CD4-positive, alpha-beta T cell (primary cell): ENCODE measurements at regions of chr14 and their contacts with region 1.

Region 1: DNA sequence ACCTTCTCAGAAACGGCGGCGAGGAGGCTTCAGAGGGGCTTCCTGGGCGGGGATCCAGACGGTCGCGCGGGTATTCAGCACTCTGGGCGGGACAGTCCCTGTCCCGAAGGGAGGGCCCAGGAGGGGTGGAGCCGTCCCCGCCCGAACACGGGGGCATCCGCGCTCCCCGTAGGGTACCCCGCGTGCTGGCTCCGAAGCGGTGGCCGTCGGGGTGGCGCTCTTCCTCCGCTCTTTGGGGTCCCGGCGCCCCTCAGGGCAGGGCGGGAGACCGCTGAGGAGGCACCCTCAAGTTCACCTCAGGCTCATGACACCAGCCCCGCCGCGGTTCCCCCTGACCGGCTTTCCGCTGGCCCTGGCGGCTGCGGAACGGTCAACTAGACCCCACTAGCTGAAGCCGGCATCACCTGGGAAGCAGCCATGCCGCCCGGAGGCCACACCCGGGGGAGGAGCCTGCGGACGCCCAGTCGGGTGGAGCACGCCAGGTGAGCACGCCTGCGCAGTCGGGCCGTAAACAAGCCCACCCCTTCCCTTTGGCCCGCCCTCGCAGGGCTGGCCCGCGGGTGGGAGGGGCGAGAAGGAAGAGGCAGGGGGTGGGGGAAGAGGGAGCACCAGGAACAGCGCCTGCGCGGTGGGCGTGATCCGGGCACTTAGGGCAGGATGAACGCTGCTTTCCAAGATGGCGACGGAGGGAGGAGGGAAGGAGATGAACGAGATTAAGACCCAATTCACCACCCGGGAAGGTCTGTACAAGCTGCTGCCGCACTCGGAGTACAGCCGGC is at the start of gene WDR20:
- DNase-seq: peak; percentile 99 to 100 (median 99)
- ATAC-seq: peak; percentile 94
- H3K4me3 ChIP-seq: peak within 1 kb of the TSS; percentile 96
- H3K4me3 Mint-ChIP-seq: peak within 1 kb of the TSS; percentile 100
- H3K27ac ChIP-seq: peak within 1 kb of the TSS; percentile 77 to 88
- H3K27ac Mint-ChIP-seq: peak within 1 kb of the TSS; percentile 99
- H3K4me1 ChIP-seq: peaks cover 16% of the 10 kb centered on the region
- H3K4me1 Mint-ChIP-seq: peaks cover 30% of the 10 kb centered on the region
- H3K27me3 ChIP-seq: no peaks in the 10 kb centered on the region
- H3K27me3 Mint-ChIP-seq: no peaks in the 10 kb centered on the region
- CTCF ChIP-seq: no peak
- total RNA-seq, gene WDR20: 40.1 to 41.2 TPM

Region 2: GRCh38 chr14:101947906-101948665 is 191.4 kb before region 1 on chr14:
- CTCF ChIA-PET with region 1: no interaction called
- POLR2A ChIA-PET with region 1: interaction called, 4 read pairs
- intact Hi-C with region 1: loop called in 1 of 2 experiments (anchors 1 kb)
- DNase-seq: peak; percentile 98 to 100 (median 99)
- ATAC-seq: peak; percentile 96
- H3K4me3 ChIP-seq: peak overlapping the region; percentile 78
- H3K4me3 Mint-ChIP-seq: peak overlapping the region; percentile 94
- H3K27ac ChIP-seq: peak overlapping the region; percentile 87 to 93
- H3K27ac Mint-ChIP-seq: peak overlapping the region; percentile 99
- H3K4me1 ChIP-seq: peaks cover 23% of the 10 kb centered on the region
- H3K4me1 Mint-ChIP-seq: peaks cover 18% of the 10 kb centered on the region
- H3K27me3 ChIP-seq: peaks cover 8 to 22% of the 10 kb centered on the region in 2 experiments
- H3K27me3 Mint-ChIP-seq: peaks cover 31% of the 10 kb centered on the region
- CTCF ChIP-seq: no peak

Region 3: GRCh38 chr14:102034301-102034700 is 105.1 kb before region 1 on chr14:
- CTCF ChIA-PET with region 1: no interaction called
- POLR2A ChIA-PET with region 1: no interaction called
- intact Hi-C with region 1: no loop called
- DNase-seq: no peak
- ATAC-seq: no peak
- H3K4me3 ChIP-seq: no peak overlapping the region
- H3K4me3 Mint-ChIP-seq: no peak overlapping the region
- H3K27ac ChIP-seq: no peak overlapping the region
- H3K27ac Mint-ChIP-seq: no peak overlapping the region
- H3K4me1 ChIP-seq: no peaks in the 10 kb centered on the region
- H3K4me1 Mint-ChIP-seq: no peaks in the 10 kb centered on the region
- H3K27me3 ChIP-seq: no peaks in the 10 kb centered on the region
- H3K27me3 Mint-ChIP-seq: no peaks in the 10 kb centered on the region
- CTCF ChIP-seq: no peak

Region 4: GRCh38 chr14:102063091-102063802 is 76.2 kb before region 1 on chr14:
- CTCF ChIA-PET with region 1: no interaction called
- POLR2A ChIA-PET with region 1: no interaction called
- intact Hi-C with region 1: no loop called
- DNase-seq: peak; percentile 51 to 86 (median 62)
- ATAC-seq: peak; percentile 95
- H3K4me3 ChIP-seq: no peak overlapping the region
- H3K4me3 Mint-ChIP-seq: no peak overlapping the region
- H3K27ac ChIP-seq: no peak overlapping the region
- H3K27ac Mint-ChIP-seq: no peak overlapping the region
- H3K4me1 ChIP-seq: peaks cover 6% of the 10 kb centered on the region
- H3K4me1 Mint-ChIP-seq: peaks cover 4% of the 10 kb centered on the region
- H3K27me3 ChIP-seq: no peaks in the 10 kb centered on the region
- H3K27me3 Mint-ChIP-seq: no peaks in the 10 kb centered on the region
- CTCF ChIP-seq: peak; percentile 32

Region 5: GRCh38 chr14:102086972-102087761 is 52.3 kb before region 1 on chr14 and contains the start of gene HSP90AA1:
- CTCF ChIA-PET with region 1: no interaction called
- POLR2A ChIA-PET with region 1: interaction called, 12 read pairs
- intact Hi-C with region 1: loop called (anchors 2 kb)
- DNase-seq: peak; percentile 88 to 98 (median 94)
- ATAC-seq: peak; percentile 77
- H3K4me3 ChIP-seq: peak within 1 kb of the TSS; percentile 74
- H3K4me3 Mint-ChIP-seq: peak within 1 kb of the TSS; percentile 98
- H3K27ac ChIP-seq: peak within 1 kb of the TSS; percentile 95 to 98
- H3K27ac Mint-ChIP-seq: peak within 1 kb of the TSS; percentile 91
- H3K4me1 ChIP-seq: peaks cover 51% of the 10 kb centered on the region
- H3K4me1 Mint-ChIP-seq: peaks cover 64% of the 10 kb centered on the region
- H3K27me3 ChIP-seq: no peaks in the 10 kb centered on the region
- H3K27me3 Mint-ChIP-seq: no peaks in the 10 kb centered on the region
- CTCF ChIP-seq: no peak
- total RNA-seq, gene HSP90AA1: 451 to 462 TPM

Region 6: DNA sequence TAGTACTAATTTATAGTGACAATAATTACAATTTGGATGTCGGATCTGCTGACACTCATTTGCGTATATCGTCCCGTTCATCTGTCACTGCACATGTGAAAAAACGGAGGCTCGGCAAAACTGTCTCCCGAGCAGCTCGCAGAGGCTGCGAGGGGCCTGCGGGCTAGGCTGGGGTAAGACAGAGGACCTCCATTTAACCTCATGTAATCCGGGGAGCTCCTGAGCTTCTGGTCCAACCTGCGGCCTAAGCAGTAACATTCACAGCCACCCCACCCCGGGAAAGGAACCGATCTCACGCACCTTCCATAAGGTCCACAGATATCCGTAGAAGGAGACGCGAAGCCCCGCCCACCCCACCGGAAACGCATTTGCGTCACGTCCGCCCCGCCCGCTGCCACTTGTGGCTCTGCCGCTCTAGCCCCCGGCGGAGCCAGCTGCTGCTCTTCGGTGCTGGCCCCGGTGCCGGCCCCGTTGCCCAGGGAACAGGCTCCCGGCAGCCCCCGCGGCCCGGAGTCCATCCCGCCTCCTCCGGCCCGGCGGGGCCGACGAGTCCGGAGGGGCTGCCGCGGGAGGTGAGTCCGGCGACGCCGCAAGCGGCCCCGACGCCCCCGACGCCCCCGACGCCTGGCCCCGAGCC is 223.2 kb after region 1 on chr14 and contains the starts of genes CINP and TECPR2:
- CTCF ChIA-PET with region 1: no interaction called
- POLR2A ChIA-PET with region 1: no interaction called
- intact Hi-C with region 1: loop called in 1 of 2 experiments (anchors 2 kb)
- DNase-seq: peak; percentile 92 to 99 (median 96)
- ATAC-seq: peak; percentile 90
- H3K4me3 ChIP-seq: peak within 1 kb of the TSS; percentile 91
- H3K4me3 Mint-ChIP-seq: peak within 1 kb of the TSS; percentile 94
- H3K27ac ChIP-seq: peak within 1 kb of the TSS; percentile 74 to 89
- H3K27ac Mint-ChIP-seq: no peak within 1 kb of the TSS
- H3K4me1 ChIP-seq: peaks cover 27% of the 10 kb centered on the region
- H3K4me1 Mint-ChIP-seq: peaks cover 21% of the 10 kb centered on the region
- H3K27me3 ChIP-seq: no peaks in the 10 kb centered on the region
- H3K27me3 Mint-ChIP-seq: no peaks in the 10 kb centered on the region
- CTCF ChIP-seq: no peak
- total RNA-seq, gene CINP: 12.6 to 14.5 TPM
- total RNA-seq, gene TECPR2: 5.0 to 5.4 TPM

Region 7: DNA sequence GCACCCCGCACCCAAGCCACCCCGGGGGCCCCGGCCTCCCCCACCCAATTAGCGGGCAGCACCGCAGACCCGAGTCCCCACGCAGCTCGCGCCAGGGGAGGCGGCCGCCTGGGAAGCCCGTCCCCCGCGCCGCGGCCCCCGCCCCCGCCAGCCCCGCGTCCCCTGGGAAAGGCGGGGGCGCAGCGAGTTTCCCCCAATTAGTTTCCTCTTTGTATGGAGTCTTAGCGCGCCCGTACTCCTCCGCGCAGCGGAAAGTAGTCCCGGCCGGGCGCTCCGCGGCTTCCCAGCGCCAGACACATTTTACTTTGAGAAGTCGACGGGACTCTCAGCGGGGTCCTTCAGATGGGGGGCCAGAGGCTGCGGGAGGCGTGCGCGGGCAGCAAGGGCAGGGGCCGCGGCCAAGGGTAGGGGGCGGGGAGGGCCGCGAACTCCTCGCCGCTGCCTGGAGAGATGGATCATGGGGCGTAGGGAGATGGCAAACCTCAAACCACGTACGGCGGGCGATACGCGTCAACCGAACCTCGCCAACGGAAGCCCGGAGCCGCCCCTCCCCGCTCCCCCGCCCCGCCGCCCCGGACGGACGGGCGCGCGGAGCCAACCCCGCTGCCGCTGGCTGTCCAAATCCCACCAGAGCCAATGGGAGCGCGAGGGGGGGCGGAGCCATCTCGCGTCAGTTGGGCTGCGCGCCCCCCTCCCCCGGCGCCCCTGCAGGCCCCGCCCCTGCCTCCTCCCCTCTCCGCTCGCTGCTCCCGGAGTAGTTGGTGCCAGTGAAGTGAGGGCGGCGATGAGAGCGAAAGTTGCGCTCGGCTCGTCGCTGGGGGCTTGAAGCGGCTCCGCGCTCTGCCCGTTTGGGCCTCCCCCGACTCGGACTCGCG is 452.7 kb after region 1 on chr14 and contains the start of gene RCOR1:
- CTCF ChIA-PET with region 1: no interaction called
- POLR2A ChIA-PET with region 1: no interaction called
- intact Hi-C with region 1: loop called in 1 of 2 experiments (anchors 2 kb)
- DNase-seq: peak; percentile 97 to 99 (median 98)
- ATAC-seq: peak; percentile 88
- H3K4me3 ChIP-seq: peak within 1 kb of the TSS; percentile 77
- H3K4me3 Mint-ChIP-seq: peak within 1 kb of the TSS; percentile 99
- H3K27ac ChIP-seq: peak within 1 kb of the TSS; percentile 86 to 88
- H3K27ac Mint-ChIP-seq: peak within 1 kb of the TSS; percentile 95
- H3K4me1 ChIP-seq: peaks cover 25% of the 10 kb centered on the region
- H3K4me1 Mint-ChIP-seq: peaks cover 30% of the 10 kb centered on the region
- H3K27me3 ChIP-seq: no peaks in the 10 kb centered on the region
- H3K27me3 Mint-ChIP-seq: no peaks in the 10 kb centered on the region
- CTCF ChIP-seq: no peak
- total RNA-seq, gene RCOR1: 20.5 to 23.1 TPM